Activated naive CD4-positive, alpha-beta T cell treated with anti-CD3 and anti-CD28 coated beads for 36 hours (primary cell): ENCODE measurements at regions of chr17 and their contacts with region 1.

Region 1: DNA sequence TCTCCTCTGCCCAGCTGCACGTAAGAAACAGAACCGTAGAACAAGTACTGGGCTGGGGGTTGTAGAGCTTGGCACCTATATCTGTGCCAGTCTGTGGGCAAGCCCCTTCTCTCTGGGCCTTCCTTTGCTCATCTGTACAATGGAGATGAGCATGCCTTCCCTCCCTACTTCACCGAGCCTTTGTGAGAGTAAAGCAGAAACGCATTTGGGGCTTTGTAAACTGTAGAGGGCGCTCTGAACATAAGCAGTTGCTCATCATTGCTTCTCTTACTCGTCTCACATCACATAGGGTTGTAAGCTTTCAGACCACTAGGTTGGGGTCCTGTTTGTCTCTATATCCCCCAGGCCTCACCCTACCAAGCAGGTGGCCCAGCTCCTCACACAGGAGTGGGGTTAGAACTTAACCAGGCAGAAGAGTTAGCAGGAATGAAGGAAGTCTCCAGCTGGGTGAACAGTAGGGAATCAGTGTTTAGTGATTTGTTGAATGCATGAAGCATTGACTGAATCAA is 15.1 kb downstream of the SAMD14 start:
- DNase-seq: peak; percentile 76
- H3K4me3 Mint-ChIP-seq: no peak overlapping the region
- H3K27ac Mint-ChIP-seq: no peak overlapping the region
- H3K4me1 Mint-ChIP-seq: peaks cover 7% of the 10 kb centered on the region
- H3K27me3 Mint-ChIP-seq: peaks cover 26% of the 10 kb centered on the region

Region 2: GRCh38 chr17:50129728-50130558 is 15.0 kb after region 1 on chr17 and contains the start of gene SAMD14:
- CTCF ChIA-PET with region 1: interaction called, 11 read pairs
- intact Hi-C with region 1: loop called (anchors 2 kb)
- DNase-seq: peak; percentile 58
- H3K4me3 Mint-ChIP-seq: peak within 1 kb of the TSS; percentile 67
- H3K27ac Mint-ChIP-seq: no peak within 1 kb of the TSS
- H3K4me1 Mint-ChIP-seq: peaks cover 24% of the 10 kb centered on the region
- H3K27me3 Mint-ChIP-seq: peaks cover 17% of the 10 kb centered on the region
- total RNA-seq, gene SAMD14: 1.1 to 1.3 TPM

Region 3: DNA sequence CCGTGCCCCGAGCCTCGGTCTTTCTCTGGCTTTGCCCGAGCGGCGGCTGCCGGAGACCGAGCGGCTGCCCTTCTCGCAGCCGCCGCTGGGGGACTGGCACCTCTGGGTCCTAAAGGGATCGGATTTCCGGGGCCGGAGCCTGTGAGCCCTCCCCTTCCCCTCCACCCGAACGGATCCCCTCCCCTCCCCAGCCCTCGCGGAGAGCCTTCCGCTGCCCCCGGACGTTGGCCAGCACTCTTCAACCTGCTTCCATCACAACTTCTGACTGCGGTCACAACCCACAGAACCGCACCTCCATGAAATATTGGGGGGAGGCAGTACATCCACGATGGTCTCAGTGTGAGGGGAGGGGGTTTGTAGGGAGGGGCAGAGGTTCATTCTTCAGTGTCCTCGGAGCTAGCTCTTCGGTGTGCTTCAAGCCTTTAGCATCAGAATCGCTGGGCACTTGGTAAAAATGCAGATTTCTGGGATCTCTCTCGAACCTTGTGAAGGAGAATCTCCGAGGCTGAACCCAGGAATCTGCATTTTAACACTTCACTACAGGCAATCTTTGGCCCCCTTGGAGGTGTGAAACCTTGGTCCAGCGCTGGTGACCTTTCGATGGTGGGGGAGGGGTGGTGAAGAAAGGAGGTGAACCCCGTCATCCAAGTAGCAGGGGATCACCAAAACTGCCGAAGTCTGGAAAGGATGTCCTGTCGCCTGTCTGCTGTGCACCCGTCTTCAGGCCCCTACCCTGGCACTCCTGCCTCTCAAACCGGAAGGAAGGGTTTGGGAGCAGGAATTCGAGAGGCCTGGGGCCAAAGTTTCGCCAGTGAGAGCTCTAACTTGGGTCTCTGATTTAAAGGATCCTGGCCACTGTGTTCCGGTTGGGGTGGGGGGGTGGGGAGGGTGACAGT is 36.4 kb after region 1 on chr17:
- CTCF ChIA-PET with region 1: interaction called, 6 read pairs
- intact Hi-C with region 1: loop called (anchors 2 kb)
- DNase-seq: peak; percentile 94
- H3K4me3 Mint-ChIP-seq: peak overlapping the region; percentile 88
- H3K27ac Mint-ChIP-seq: peak overlapping the region; percentile 96
- H3K4me1 Mint-ChIP-seq: peaks cover 44% of the 10 kb centered on the region
- H3K27me3 Mint-ChIP-seq: no peaks in the 10 kb centered on the region

Region 4: DNA sequence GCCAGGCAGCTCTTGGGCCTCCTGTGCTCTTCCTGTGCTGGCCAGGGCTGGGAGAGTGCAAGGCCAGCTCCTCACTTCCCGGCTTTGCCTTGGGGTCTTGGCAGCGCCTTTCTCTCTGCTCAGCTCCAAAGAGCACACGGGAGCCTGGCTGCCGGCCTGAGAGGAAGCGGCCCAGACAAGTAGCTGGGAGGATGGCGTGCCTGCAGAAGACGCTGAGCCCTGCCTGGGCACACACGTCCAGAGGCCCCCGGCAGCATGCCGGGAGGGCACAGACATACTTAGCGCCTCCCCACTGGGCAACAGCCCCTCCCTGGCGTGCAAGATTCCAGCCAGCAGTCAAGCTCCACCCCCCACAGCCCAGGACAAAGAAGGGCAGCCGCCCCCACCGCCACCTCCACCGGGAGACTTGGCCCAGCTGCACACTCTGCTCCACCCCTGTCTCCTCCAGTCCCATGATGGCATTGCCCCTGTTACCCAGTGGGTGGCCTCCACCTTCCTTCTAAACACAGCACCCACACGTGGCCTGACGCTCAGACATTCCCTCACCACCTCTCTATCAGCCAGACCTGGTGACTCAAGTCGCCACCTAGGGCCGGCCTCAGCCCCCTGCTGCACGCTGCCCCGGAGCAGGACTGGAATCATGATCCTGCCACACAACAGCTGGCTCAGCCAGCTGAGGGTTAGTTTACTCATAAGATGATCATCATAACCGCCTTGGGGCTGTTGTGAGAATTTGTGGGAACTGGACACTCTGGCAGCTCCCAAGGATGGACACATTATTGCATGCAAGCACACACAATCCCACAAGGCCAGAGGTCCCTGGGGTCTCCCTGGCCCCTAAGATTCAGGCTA is 63.3 kb after region 1 on chr17:
- CTCF ChIA-PET with region 1: interaction called, 21 read pairs
- intact Hi-C with region 1: loop called (anchors 5 kb)
- DNase-seq: peak; percentile 73
- H3K4me3 Mint-ChIP-seq: peak overlapping the region; percentile 22
- H3K27ac Mint-ChIP-seq: no peak overlapping the region
- H3K4me1 Mint-ChIP-seq: peaks cover 15% of the 10 kb centered on the region
- H3K27me3 Mint-ChIP-seq: no peaks in the 10 kb centered on the region

Region 5: DNA sequence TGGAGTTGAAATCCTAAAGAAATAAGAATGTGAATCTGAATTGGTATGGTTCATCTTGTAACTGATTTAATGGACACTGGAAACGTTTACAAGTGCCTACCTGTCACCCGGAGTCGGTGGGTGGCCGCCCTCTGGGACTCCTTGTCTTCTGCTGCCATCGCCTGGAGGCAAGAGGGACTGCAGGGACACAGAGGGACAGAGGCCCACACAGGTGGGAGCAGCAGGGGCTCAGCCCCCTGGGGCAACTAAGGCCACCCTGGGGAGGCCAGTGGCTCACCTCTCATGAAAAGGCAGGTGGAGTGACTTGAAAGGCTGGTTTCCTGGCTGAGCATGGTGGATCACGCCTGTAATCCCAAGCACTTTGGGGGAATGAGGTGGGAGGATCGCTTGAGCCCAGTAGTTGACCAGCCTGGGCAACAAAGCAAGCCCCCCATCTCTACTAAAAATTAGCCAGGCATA is 182.5 kb after region 1 on chr17:
- CTCF ChIA-PET with region 1: interaction called, 6 read pairs
- intact Hi-C with region 1: loop called (anchors 1 kb)
- DNase-seq: peak; percentile 89
- H3K4me3 Mint-ChIP-seq: no peak overlapping the region
- H3K27ac Mint-ChIP-seq: no peak overlapping the region
- H3K4me1 Mint-ChIP-seq: no peaks in the 10 kb centered on the region
- H3K27me3 Mint-ChIP-seq: peaks cover 3% of the 10 kb centered on the region